Activated CD8-positive, alpha-beta T cell treated with anti-CD3 and anti-CD28 coated beads, Interleukin-2, amount 10 ng/mL, durations not matched to agents 7 days and 5 days (primary cell): ENCODE measurements at regions of chr10 and their contacts with region 1.

Region 1: GRCh38 chr10:114470956-114471905 is 66.9 kb upstream of the AFAP1L2 start:
- DNase-seq: peak; percentile 77
- ATAC-seq: peak; percentile 95
- H3K4me3 Mint-ChIP-seq: no peak overlapping the region
- H3K27ac Mint-ChIP-seq: no peak overlapping the region
- H3K4me1 Mint-ChIP-seq: peaks cover 16% of the 10 kb centered on the region
- H3K27me3 Mint-ChIP-seq: no peaks in the 10 kb centered on the region

Region 2: GRCh38 chr10:114412907-114413386 is 58.3 kb before region 1 on chr10:
- CTCF ChIA-PET with region 1: no interaction called
- POLR2A ChIA-PET with region 1: no interaction called
- DNase-seq: no peak
- ATAC-seq: no peak
- H3K4me3 Mint-ChIP-seq: no peak overlapping the region
- H3K27ac Mint-ChIP-seq: no peak overlapping the region
- H3K4me1 Mint-ChIP-seq: no peaks in the 10 kb centered on the region
- H3K27me3 Mint-ChIP-seq: peaks cover 24% of the 10 kb centered on the region

Region 3: DNA sequence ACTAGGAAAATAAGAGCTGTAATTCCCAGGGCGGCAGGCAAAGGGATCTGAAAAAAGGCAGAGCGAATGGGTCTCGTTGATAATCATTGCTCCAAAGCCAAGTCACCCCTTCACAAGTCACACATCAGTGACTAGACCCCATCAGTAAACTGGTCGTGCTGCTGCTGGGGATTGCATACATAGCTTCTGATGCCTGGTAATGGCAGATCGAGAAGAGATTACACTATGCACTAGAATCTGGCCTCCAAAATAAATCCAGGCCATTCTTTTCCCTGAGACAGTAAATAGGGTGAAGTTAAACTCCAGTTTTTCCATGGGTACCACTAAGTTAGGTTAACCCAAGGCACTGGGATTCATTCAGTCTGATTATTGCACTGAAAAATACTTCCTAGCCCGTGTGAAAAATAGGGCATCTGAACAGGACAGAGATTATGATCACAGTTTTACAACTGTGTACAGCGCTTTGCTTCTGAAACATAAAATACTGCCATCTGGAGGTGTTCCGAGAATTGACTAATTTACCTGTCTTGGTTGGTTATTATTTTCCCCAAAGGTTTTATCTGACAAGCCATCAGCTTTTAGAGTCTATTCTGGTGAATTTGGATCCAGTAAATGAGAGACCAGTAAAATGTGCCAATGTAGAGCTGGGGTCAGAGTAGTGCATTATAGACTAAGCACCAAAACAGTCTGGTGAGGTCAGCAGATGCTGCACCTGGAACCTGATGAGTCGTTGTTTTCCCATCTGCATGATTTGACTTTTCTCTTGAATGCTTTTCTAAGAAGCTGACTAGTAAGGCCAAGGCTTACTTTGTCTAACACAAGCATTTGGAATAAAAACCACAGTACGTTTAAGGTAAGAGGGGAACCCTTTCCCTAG is 15.9 kb after region 1 on chr10:
- CTCF ChIA-PET with region 1: interaction called, 38 read pairs
- POLR2A ChIA-PET with region 1: no interaction called
- DNase-seq: no peak
- ATAC-seq: no peak
- H3K4me3 Mint-ChIP-seq: no peak overlapping the region
- H3K27ac Mint-ChIP-seq: no peak overlapping the region
- H3K4me1 Mint-ChIP-seq: peaks cover 28% of the 10 kb centered on the region
- H3K27me3 Mint-ChIP-seq: no peaks in the 10 kb centered on the region

Region 4: GRCh38 chr10:114499630-114500190 is 28.5 kb after region 1 on chr10:
- CTCF ChIA-PET with region 1: interaction called, 13 read pairs
- POLR2A ChIA-PET with region 1: no interaction called
- DNase-seq: peak; percentile 64
- ATAC-seq: peak; percentile 66
- H3K4me3 Mint-ChIP-seq: peak overlapping the region; percentile 56
- H3K27ac Mint-ChIP-seq: peak overlapping the region; percentile 89
- H3K4me1 Mint-ChIP-seq: peaks cover 80% of the 10 kb centered on the region
- H3K27me3 Mint-ChIP-seq: no peaks in the 10 kb centered on the region

Region 5: GRCh38 chr10:114515298-114515914 is 44.2 kb after region 1 on chr10:
- CTCF ChIA-PET with region 1: interaction called, 128 read pairs
- POLR2A ChIA-PET with region 1: no interaction called
- DNase-seq: no peak
- ATAC-seq: no peak
- H3K4me3 Mint-ChIP-seq: no peak overlapping the region
- H3K27ac Mint-ChIP-seq: peak overlapping the region; percentile 1
- H3K4me1 Mint-ChIP-seq: peaks cover 90% of the 10 kb centered on the region
- H3K27me3 Mint-ChIP-seq: no peaks in the 10 kb centered on the region

Region 6: GRCh38 chr10:114541081-114541796 is 70.0 kb after region 1 on chr10:
- CTCF ChIA-PET with region 1: interaction called, 76 read pairs
- POLR2A ChIA-PET with region 1: interaction called, 3 read pairs
- DNase-seq: peak; percentile 88
- ATAC-seq: peak; percentile 83
- H3K4me3 Mint-ChIP-seq: peak overlapping the region; percentile 60
- H3K27ac Mint-ChIP-seq: peak overlapping the region; percentile 98
- H3K4me1 Mint-ChIP-seq: peaks cover 89% of the 10 kb centered on the region
- H3K27me3 Mint-ChIP-seq: no peaks in the 10 kb centered on the region

Region 7: GRCh38 chr10:114681542-114681941 is 210.3 kb after region 1 on chr10:
- CTCF ChIA-PET with region 1: no interaction called
- POLR2A ChIA-PET with region 1: no interaction called
- DNase-seq: no peak
- ATAC-seq: no peak
- H3K4me3 Mint-ChIP-seq: no peak overlapping the region
- H3K27ac Mint-ChIP-seq: no peak overlapping the region
- H3K4me1 Mint-ChIP-seq: no peaks in the 10 kb centered on the region
- H3K27me3 Mint-ChIP-seq: peaks cover 8% of the 10 kb centered on the region

Region 8: GRCh38 chr10:114703377-114704107 is 232.3 kb after region 1 on chr10:
- CTCF ChIA-PET with region 1: interaction called, 10 read pairs
- POLR2A ChIA-PET with region 1: no interaction called
- DNase-seq: peak; percentile 30
- ATAC-seq: peak; percentile 36
- H3K4me3 Mint-ChIP-seq: no peak overlapping the region
- H3K27ac Mint-ChIP-seq: no peak overlapping the region
- H3K4me1 Mint-ChIP-seq: no peaks in the 10 kb centered on the region
- H3K27me3 Mint-ChIP-seq: peaks cover 23% of the 10 kb centered on the region